HEK293 (cell line): ENCODE measurements at regions of chr9 and their contacts with region 1.

Region 1: GRCh38 chr9:77907585-77907984 is 124.0 kb downstream of the GNAQ start:
- H3K4me3 ChIP-seq: no peak overlapping the region
- H3K27ac ChIP-seq: no peak overlapping the region
- H3K4me1 ChIP-seq: no peaks in the 10 kb centered on the region; the same call in 1 of the 2 replicates
- CTCF ChIP-seq: no peak

Region 2: GRCh38 chr9:77779010-77779409 is 128.6 kb before region 1 on chr9:
- CTCF ChIA-PET with region 1: no interaction called
- POLR2A ChIA-PET with region 1: no interaction called
- H3K4me3 ChIP-seq: no peak overlapping the region
- H3K27ac ChIP-seq: no peak overlapping the region
- H3K4me1 ChIP-seq: no peaks in the 10 kb centered on the region
- CTCF ChIP-seq: no peak

Region 3: DNA sequence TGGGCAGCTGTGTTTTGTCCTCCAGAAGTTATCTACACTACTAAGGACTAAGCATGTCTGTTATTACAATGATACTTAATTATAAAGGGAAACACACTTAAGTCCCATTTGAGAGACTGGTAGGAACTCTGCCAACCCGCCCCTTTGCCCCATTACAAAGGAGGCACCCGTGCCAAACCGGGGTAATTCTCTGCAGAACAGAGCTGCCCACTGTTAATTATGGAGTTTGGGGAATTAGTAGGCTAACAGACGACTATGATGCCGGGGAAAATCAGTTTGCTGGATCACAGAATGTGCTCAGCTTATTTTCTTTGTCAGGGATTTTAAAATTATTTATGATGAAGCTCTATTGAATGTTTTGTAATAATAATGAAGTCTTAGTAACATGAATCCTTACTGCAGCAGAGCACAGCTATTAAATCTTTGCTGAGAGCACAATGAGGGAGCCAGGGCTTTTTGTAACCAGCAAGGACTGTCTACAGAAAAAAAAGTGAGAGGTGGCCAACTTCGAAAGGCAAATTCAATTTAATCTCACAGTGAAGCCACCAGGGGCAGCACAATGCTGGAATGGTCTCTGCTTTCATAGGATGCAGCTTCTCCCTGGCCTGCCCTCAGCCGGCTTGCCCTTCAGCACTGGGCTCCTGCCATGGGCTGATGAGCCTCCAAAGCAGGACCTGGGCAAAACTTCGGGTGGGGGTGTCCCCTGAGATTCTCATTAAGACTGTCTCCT is 10.5 kb before region 1 on chr9:
- CTCF ChIA-PET with region 1: interaction called, 12 read pairs
- POLR2A ChIA-PET with region 1: no interaction called
- H3K4me3 ChIP-seq: no peak overlapping the region
- H3K27ac ChIP-seq: no peak overlapping the region
- H3K4me1 ChIP-seq: no peaks in the 10 kb centered on the region
- CTCF ChIP-seq: no peak

Region 4: DNA sequence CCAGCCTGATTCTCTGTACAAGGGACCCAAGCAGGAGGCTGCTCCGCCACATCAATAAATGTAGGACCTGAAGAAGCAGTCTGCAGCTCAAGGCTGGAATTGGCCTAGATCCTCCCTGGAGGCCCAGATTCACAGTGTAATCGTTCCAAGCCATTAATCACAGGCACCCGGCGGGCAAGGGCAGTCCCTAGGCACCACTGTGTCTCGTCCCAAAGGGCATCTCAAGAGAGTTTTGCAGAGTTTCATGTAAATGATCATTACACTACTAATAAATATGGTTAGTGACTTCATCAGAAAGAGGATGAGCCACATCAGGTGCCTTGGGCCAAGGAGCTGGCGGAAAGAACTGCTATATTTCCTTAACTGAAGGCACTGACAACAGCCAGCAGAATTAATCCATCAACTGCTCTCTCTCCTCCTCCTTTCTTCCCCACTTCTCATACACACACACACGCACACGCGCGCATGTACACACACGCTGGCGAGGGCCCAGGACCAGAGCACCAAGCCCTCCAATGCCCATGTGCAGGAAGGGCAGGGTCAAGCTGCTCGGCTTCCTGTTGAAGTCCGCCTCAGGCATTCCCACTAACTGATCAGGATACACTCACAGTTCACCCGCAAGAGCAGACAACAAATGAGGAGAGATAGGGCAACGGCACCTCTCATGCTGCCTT is 90.2 kb after region 1 on chr9:
- CTCF ChIA-PET with region 1: no interaction called
- POLR2A ChIA-PET with region 1: no interaction called
- H3K4me3 ChIP-seq: no peak overlapping the region
- H3K27ac ChIP-seq: no peak overlapping the region; the same call in 1 of the 2 replicates
- H3K4me1 ChIP-seq: peaks cover 26% of the 10 kb centered on the region
- CTCF ChIP-seq: no peak